B cell (primary cell): ENCODE measurements at regions of chr5 and their contacts with region 1.

Region 1: GRCh38 chr5:151447174-151448037 is at the start of gene SLC36A1:
- DNase-seq: peak; percentile 95
- ATAC-seq: peak; percentile 98
- H3K4me3 ChIP-seq: peak within 1 kb of the TSS; percentile 77 to 94 (median 84)
- H3K4me3 Mint-ChIP-seq: peak within 1 kb of the TSS; percentile 93
- H3K27ac ChIP-seq: peak within 1 kb of the TSS; percentile 66 to 80
- H3K27ac Mint-ChIP-seq: peak within 1 kb of the TSS; percentile 97
- H3K4me1 ChIP-seq: peaks cover 11 to 12% of the 10 kb centered on the region in 2 donors
- H3K4me1 Mint-ChIP-seq: peaks cover 25% of the 10 kb centered on the region
- H3K27me3 ChIP-seq: peaks cover 0 to 7% (median 2%) of the 10 kb centered on the region in 4 experiments
- H3K27me3 Mint-ChIP-seq: peaks cover 20% of the 10 kb centered on the region
- CTCF ChIP-seq: peak; percentile 95
- total RNA-seq, gene SLC36A1: 12.9 and 15.1 TPM in 2 replicates

Region 2: GRCh38 chr5:151427258-151427657 is 20.1 kb before region 1 on chr5:
- CTCF ChIA-PET with region 1: interaction called, 8 read pairs
- POLR2A ChIA-PET with region 1: no interaction called
- intact Hi-C with region 1: loop called (anchors 1 kb)
- DNase-seq: peak; percentile 78
- ATAC-seq: peak; percentile 95
- H3K4me3 ChIP-seq: no peak overlapping the region
- H3K4me3 Mint-ChIP-seq: no peak overlapping the region
- H3K27ac ChIP-seq: no peak overlapping the region
- H3K27ac Mint-ChIP-seq: peak overlapping the region; percentile 16
- H3K4me1 ChIP-seq: peaks cover 10 to 15% of the 10 kb centered on the region in 2 donors
- H3K4me1 Mint-ChIP-seq: peaks cover 19% of the 10 kb centered on the region
- H3K27me3 ChIP-seq: peaks cover 0 to 3% (median under 1%) of the 10 kb centered on the region in 4 experiments
- H3K27me3 Mint-ChIP-seq: peaks cover 16% of the 10 kb centered on the region
- CTCF ChIP-seq: peak; percentile 55

Region 3: GRCh38 chr5:151499501-151500035 is 52.2 kb after region 1 on chr5:
- CTCF ChIA-PET with region 1: interaction called, 9 read pairs
- POLR2A ChIA-PET with region 1: no interaction called
- intact Hi-C with region 1: loop called (anchors 1 kb)
- DNase-seq: no peak
- ATAC-seq: no peak
- H3K4me3 ChIP-seq: no peak overlapping the region
- H3K4me3 Mint-ChIP-seq: no peak overlapping the region
- H3K27ac ChIP-seq: no peak overlapping the region
- H3K27ac Mint-ChIP-seq: no peak overlapping the region
- H3K4me1 ChIP-seq: peaks cover 0 to 6% of the 10 kb centered on the region in 2 donors
- H3K4me1 Mint-ChIP-seq: peaks cover 4% of the 10 kb centered on the region
- H3K27me3 ChIP-seq: no peaks in the 10 kb centered on the region
- H3K27me3 Mint-ChIP-seq: no peaks in the 10 kb centered on the region
- CTCF ChIP-seq: no peak

Region 4: GRCh38 chr5:151651997-151652645 is 204.7 kb after region 1 on chr5:
- CTCF ChIA-PET with region 1: interaction called, 59 read pairs
- POLR2A ChIA-PET with region 1: interaction called, 4 read pairs
- intact Hi-C with region 1: no loop called
- DNase-seq: peak; percentile 77
- ATAC-seq: peak; percentile 97
- H3K4me3 ChIP-seq: no peak overlapping the region
- H3K4me3 Mint-ChIP-seq: no peak overlapping the region
- H3K27ac ChIP-seq: no peak overlapping the region
- H3K27ac Mint-ChIP-seq: no peak overlapping the region
- H3K4me1 ChIP-seq: no peaks in the 10 kb centered on the region
- H3K4me1 Mint-ChIP-seq: no peaks in the 10 kb centered on the region
- H3K27me3 ChIP-seq: peaks cover 0 to 3% (median 0%) of the 10 kb centered on the region in 4 experiments
- H3K27me3 Mint-ChIP-seq: peaks cover 4% of the 10 kb centered on the region
- CTCF ChIP-seq: peak; percentile 80

Region 5: GRCh38 chr5:151740336-151740942 is 293.0 kb after region 1 on chr5:
- CTCF ChIA-PET with region 1: interaction called, 4 read pairs
- POLR2A ChIA-PET with region 1: no interaction called
- intact Hi-C with region 1: loop called (anchors 1 kb)
- DNase-seq: peak; percentile 73
- ATAC-seq: peak; percentile 74
- H3K4me3 ChIP-seq: no peak overlapping the region
- H3K4me3 Mint-ChIP-seq: no peak overlapping the region
- H3K27ac ChIP-seq: no peak overlapping the region
- H3K27ac Mint-ChIP-seq: no peak overlapping the region
- H3K4me1 ChIP-seq: peaks cover 13 to 14% of the 10 kb centered on the region in 2 donors
- H3K4me1 Mint-ChIP-seq: peaks cover 19% of the 10 kb centered on the region
- H3K27me3 ChIP-seq: no peaks in the 10 kb centered on the region
- H3K27me3 Mint-ChIP-seq: no peaks in the 10 kb centered on the region
- CTCF ChIP-seq: peak; percentile 92

Region 6: DNA sequence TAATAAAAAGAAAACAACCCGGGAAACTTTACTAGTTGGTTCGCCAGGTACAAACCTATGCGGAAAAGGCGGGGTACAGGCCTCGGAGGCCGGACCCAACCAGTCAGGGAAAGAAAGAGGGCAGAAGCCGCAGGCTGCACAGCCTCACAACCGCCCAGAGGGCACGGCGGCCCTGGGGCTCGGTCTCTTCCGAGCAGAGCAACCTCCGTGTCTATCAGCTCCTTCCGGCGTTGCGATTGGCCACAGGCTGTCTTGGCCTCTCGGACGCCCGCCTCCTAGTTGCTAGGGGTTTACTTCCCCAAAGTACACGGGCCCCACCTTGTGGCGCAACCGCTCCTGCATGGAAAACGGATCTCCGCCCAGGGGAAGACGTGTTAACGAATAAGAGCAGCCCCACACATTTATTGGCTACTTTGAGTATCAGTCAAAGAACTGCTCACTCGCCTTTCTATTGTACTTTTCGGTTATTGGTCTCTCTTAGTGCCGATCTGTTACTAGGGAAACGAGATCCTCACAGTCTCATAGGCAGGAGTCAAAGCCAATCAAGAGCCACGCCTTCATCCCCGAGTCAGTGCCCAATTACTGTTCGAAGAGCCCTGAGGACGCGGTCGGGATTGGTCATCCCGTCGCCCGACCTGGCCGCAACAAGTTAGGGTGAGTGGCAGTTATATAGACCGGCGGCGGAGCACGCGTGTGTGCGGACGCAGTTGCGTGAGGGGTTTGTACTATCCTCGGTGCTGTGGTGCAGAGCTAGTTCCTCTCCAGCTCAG is 324.0 kb after region 1 on chr5 and contains the start of gene G3BP1:
- CTCF ChIA-PET with region 1: interaction called, 5 read pairs
- POLR2A ChIA-PET with region 1: interaction called, 3 read pairs
- intact Hi-C with region 1: loop called (anchors 1 kb)
- DNase-seq: peak; percentile 100
- ATAC-seq: peak; percentile 74
- H3K4me3 ChIP-seq: peak within 1 kb of the TSS; percentile 71 to 91 (median 81)
- H3K4me3 Mint-ChIP-seq: peak within 1 kb of the TSS; percentile 95
- H3K27ac ChIP-seq: peak within 1 kb of the TSS; percentile 87 to 92
- H3K27ac Mint-ChIP-seq: peak within 1 kb of the TSS; percentile 93
- H3K4me1 ChIP-seq: peaks cover 42 to 45% of the 10 kb centered on the region in 2 donors
- H3K4me1 Mint-ChIP-seq: peaks cover 44% of the 10 kb centered on the region
- H3K27me3 ChIP-seq: no peaks in the 10 kb centered on the region
- H3K27me3 Mint-ChIP-seq: no peaks in the 10 kb centered on the region
- CTCF ChIP-seq: peak; percentile 66
- total RNA-seq, gene G3BP1: 159 and 173 TPM in 2 replicates